Prostate gland (tissue), 2 donors: ENCODE measurements at regions of chr19 and their contacts with region 1.

Region 1: GRCh38 chr19:29771708-29772414 is 39.9 kb upstream of the CCNE1 start:
- DNase-seq: peak; percentile 22
- H3K4me3 ChIP-seq: no peak overlapping the region
- H3K27ac ChIP-seq: no peak overlapping the region
- H3K4me1 ChIP-seq: no peaks in the 10 kb centered on the region
- H3K27me3 ChIP-seq: no peaks in the 10 kb centered on the region
- CTCF ChIP-seq: peak; percentile 29 to 50 (median 42)
- POLR2A ChIP-seq: no peak

Region 2: GRCh38 chr19:29837448-29837981 is 65.7 kb after region 1 on chr19:
- intact Hi-C with region 1: no loop called
- DNase-seq: no peak
- H3K4me3 ChIP-seq: no peak overlapping the region
- H3K27ac ChIP-seq: no peak overlapping the region
- H3K4me1 ChIP-seq: no peaks in the 10 kb centered on the region
- H3K27me3 ChIP-seq: no peaks in the 10 kb centered on the region
- CTCF ChIP-seq: no peak
- POLR2A ChIP-seq: no peak

Region 3: GRCh38 chr19:30649934-30650614 is 878.2 kb after region 1 on chr19:
- intact Hi-C with region 1: loop called (anchors 10 kb)
- DNase-seq: no peak
- H3K4me3 ChIP-seq: no peak overlapping the region
- H3K27ac ChIP-seq: no peak overlapping the region
- H3K4me1 ChIP-seq: no peaks in the 10 kb centered on the region
- H3K27me3 ChIP-seq: peaks cover 3% of the 10 kb centered on the region
- CTCF ChIP-seq: peak; percentile 50 to 70 (median 63)
- POLR2A ChIP-seq: no peak